ENCODE measurements at regions of chr16 and their contacts with region 1.

Region 1: GRCh38 chr16:29973384-29974246 is at the start of gene TAOK2:
- DNase-seq: peak; percentile 92 to 94 (median 92)
- H3K4me3 ChIP-seq: peak within 1 kb of the TSS; percentile 74 to 87
- H3K4me3 Mint-ChIP-seq: peak within 1 kb of the TSS; percentile 82 to 97 (median 93)
- H3K27ac ChIP-seq: peak within 1 kb of the TSS; percentile 86
- H3K27ac Mint-ChIP-seq: peak within 1 kb of the TSS; percentile 77 to 97 (median 96)
- H3K4me1 ChIP-seq: peaks cover 36% of the 10 kb centered on the region
- H3K4me1 Mint-ChIP-seq: peaks cover 20 to 49% (median 34%) of the 10 kb centered on the region in 4 donors
- H3K27me3 ChIP-seq: no peaks in the 10 kb centered on the region
- H3K27me3 Mint-ChIP-seq: no peaks in the 10 kb centered on the region
- total RNA-seq, gene TAOK2: 53.8 to 56.0 TPM

Region 2: GRCh38 chr16:29877266-29877961 is 96.2 kb before region 1 on chr16:
- CTCF ChIA-PET with region 1: no interaction called
- POLR2A ChIA-PET with region 1: no interaction called
- intact Hi-C with region 1: no loop called
- DNase-seq: peak; percentile 18 to 65 (median 33)
- H3K4me3 ChIP-seq: peak overlapping the region in 1 of 2 donors; percentile 38
- H3K4me3 Mint-ChIP-seq: peak overlapping the region; percentile 58 to 88 (median 82)
- H3K27ac ChIP-seq: no peak overlapping the region
- H3K27ac Mint-ChIP-seq: peak overlapping the region in 2 of 7 donors; percentile 20 to 65
- H3K4me1 ChIP-seq: peaks cover 14% of the 10 kb centered on the region
- H3K4me1 Mint-ChIP-seq: peaks cover 3 to 21% (median 14%) of the 10 kb centered on the region in 4 donors
- H3K27me3 ChIP-seq: peaks cover 8% of the 10 kb centered on the region
- H3K27me3 Mint-ChIP-seq: peaks cover 12 to 26% of the 10 kb centered on the region in 2 donors

Region 3: DNA sequence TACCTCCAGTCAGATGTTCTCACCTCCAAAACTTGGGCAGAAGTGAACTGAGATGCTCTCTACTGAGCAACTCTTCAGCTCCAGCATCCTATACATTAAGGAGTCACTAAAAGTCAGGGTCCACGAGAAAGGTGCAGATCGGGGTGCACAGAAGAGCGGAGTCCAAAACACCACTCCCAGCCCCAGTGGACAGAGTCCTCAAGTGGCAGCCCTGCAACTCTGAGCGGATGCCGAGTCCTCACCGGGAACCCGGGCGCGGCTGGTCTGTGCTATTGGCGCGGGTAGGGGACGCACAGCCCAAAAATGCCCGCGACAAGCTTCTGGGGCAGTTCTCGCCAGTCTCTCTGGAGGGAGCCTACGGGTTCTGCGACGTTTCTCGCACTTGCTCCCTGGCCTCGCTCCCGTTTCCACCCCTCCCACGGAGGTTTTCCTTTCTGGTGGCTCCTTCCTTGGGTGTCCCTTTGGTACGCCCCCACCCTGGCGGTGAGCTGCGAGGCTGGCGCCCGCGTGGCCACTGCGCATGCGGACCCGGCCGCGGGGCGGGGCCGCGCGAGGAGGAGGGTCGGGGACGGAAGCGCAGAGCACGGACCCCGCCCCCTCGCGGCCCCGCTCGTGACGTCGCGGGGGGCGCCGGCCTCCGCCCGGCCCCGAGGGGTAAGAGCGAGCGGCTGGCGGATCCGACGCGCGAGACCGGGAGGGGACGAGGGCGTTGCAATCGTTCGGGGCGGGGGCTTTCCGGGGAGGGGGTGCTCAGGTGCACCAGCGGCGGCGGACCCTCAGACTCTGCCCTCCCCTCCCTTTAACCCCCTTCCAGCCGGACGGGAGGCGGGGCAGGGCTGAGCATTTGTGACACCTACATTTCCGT is 11.9 kb before region 1 on chr16 and contains the start of gene TMEM219:
- CTCF ChIA-PET with region 1: interaction called, 29 read pairs
- POLR2A ChIA-PET with region 1: interaction called, 113 read pairs
- intact Hi-C with region 1: loop called (anchors 1 kb)
- DNase-seq: peak; percentile 92 to 98 (median 95)
- H3K4me3 ChIP-seq: peak within 1 kb of the TSS; percentile 75 to 89
- H3K4me3 Mint-ChIP-seq: peak within 1 kb of the TSS; percentile 88 to 95 (median 92)
- H3K27ac ChIP-seq: peak within 1 kb of the TSS; percentile 87
- H3K27ac Mint-ChIP-seq: peak within 1 kb of the TSS; percentile 92 to 99 (median 96)
- H3K4me1 ChIP-seq: peaks cover 19% of the 10 kb centered on the region
- H3K4me1 Mint-ChIP-seq: peaks cover 11 to 30% (median 20%) of the 10 kb centered on the region in 4 donors
- H3K27me3 ChIP-seq: no peaks in the 10 kb centered on the region
- H3K27me3 Mint-ChIP-seq: no peaks in the 10 kb centered on the region
- total RNA-seq, gene TMEM219: 80.8 to 103 TPM

Region 4: DNA sequence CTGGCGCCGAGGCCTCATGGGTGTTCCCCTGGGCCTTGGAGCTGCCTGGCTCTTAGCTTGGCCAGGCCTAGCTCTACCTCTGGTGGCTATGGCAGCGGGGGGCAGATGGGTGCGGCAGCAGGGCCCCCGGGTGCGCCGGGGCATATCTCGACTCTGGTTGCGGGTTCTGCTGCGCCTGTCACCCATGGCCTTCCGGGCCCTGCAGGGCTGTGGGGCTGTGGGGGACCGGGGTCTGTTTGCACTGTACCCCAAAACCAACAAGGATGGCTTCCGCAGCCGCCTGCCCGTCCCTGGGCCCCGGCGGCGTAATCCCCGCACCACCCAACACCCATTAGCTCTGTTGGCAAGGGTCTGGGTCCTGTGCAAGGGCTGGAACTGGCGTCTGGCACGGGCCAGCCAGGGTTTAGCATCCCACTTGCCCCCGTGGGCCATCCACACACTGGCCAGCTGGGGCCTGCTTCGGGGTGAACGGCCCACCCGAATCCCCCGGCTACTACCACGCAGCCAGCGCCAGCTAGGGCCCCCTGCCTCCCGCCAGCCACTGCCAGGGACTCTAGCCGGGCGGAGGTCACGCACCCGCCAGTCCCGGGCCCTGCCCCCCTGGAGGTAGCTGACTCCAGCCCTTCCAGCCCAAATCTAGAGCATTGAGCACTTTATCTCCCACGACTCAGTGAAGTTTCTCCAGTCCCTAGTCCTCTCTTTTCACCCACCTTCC is 13.9 kb after region 1 on chr16:
- CTCF ChIA-PET with region 1: interaction called, 4 read pairs
- POLR2A ChIA-PET with region 1: interaction called, 14 read pairs
- intact Hi-C with region 1: no loop called
- DNase-seq: no peak
- H3K4me3 ChIP-seq: no peak overlapping the region
- H3K4me3 Mint-ChIP-seq: no peak overlapping the region
- H3K27ac ChIP-seq: no peak overlapping the region
- H3K27ac Mint-ChIP-seq: no peak overlapping the region
- H3K4me1 ChIP-seq: no peaks in the 10 kb centered on the region
- H3K4me1 Mint-ChIP-seq: peaks cover 0 to 2% (median 0%) of the 10 kb centered on the region in 4 donors
- H3K27me3 ChIP-seq: no peaks in the 10 kb centered on the region
- H3K27me3 Mint-ChIP-seq: no peaks in the 10 kb centered on the region